Sigmoid colon (tissue), 7 donors: ENCODE measurements at regions of chr2 and their contacts with region 1.

Region 1: GRCh38 chr2:190088917-190089316 is 26.4 kb upstream of the MSTN start:
- DNase-seq: no peak
- H3K4me3 ChIP-seq: no peak overlapping the region
- H3K27ac ChIP-seq: no peak overlapping the region
- H3K4me1 ChIP-seq: no peaks in the 10 kb centered on the region
- H3K27me3 ChIP-seq: no peaks in the 10 kb centered on the region
- CTCF ChIP-seq: peak; percentile 11 to 67 (median 59)
- EP300 ChIP-seq: no peak
- POLR2A ChIP-seq: no peak

Region 2: GRCh38 chr2:189821953-189822748 is 266.8 kb before region 1 on chr2:
- intact Hi-C with region 1: no loop called
- DNase-seq: no peak
- H3K4me3 ChIP-seq: no peak overlapping the region
- H3K27ac ChIP-seq: peak overlapping the region in 1 of 4 donors; percentile 19
- H3K4me1 ChIP-seq: peaks cover 0 to 11% (median 0%) of the 10 kb centered on the region in 4 donors
- H3K27me3 ChIP-seq: no peaks in the 10 kb centered on the region
- CTCF ChIP-seq: no peak
- EP300 ChIP-seq: no peak
- POLR2A ChIP-seq: no peak

Region 3: GRCh38 chr2:190180313-190181122 is 91.6 kb after region 1 on chr2:
- intact Hi-C with region 1: loop called (anchors 5 kb)
- DNase-seq: peak; percentile 71
- H3K4me3 ChIP-seq: peak overlapping the region; percentile 35 to 68 (median 66)
- H3K27ac ChIP-seq: peak overlapping the region; percentile 71 to 81 (median 74)
- H3K4me1 ChIP-seq: peaks cover 0 to 15% (median 10%) of the 10 kb centered on the region in 4 donors
- H3K27me3 ChIP-seq: no peaks in the 10 kb centered on the region
- CTCF ChIP-seq: peak in 2 of 4 experiments; percentile 23 to 34
- EP300 ChIP-seq: no peak
- POLR2A ChIP-seq: no peak

Region 4: DNA sequence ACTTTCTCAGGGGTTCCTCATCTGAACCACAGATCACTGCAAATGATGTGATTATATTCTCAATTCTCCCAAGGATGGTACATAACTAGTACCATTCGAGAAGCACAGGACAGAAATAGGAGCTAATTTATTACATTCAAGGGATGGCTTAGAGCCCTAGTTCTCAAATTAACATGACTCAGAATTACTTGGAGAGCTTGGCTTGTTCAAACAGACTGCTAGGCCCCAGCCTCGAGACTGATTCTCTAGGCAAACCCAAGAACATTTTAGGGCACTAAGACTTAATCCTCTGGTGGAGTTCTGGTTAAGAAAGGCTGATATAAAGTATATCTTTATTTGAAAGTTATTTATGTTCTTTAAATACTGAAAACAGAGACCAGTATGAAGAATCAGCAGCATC is 194.9 kb after region 1 on chr2:
- intact Hi-C with region 1: loop called (anchors 5 kb)
- DNase-seq: no peak
- H3K4me3 ChIP-seq: no peak overlapping the region
- H3K27ac ChIP-seq: peak overlapping the region in 1 of 4 donors; percentile 4
- H3K4me1 ChIP-seq: no peaks in the 10 kb centered on the region
- H3K27me3 ChIP-seq: no peaks in the 10 kb centered on the region
- CTCF ChIP-seq: no peak
- EP300 ChIP-seq: no peak
- POLR2A ChIP-seq: no peak

Region 5: GRCh38 chr2:190319555-190320498 is 230.9 kb after region 1 on chr2 and contains the start of gene HIBCH:
- intact Hi-C with region 1: loop called (anchors 2 kb)
- DNase-seq: peak; percentile 99
- H3K4me3 ChIP-seq: peak within 1 kb of the TSS; percentile 58 to 72 (median 64)
- H3K27ac ChIP-seq: peak within 1 kb of the TSS; percentile 80 to 91 (median 89)
- H3K4me1 ChIP-seq: peaks cover 0 to 41% (median 33%) of the 10 kb centered on the region in 4 donors
- H3K27me3 ChIP-seq: no peaks in the 10 kb centered on the region
- CTCF ChIP-seq: peak; percentile 46 to 66 (median 62)
- EP300 ChIP-seq: peak in 1 of 4 donors; percentile 46
- POLR2A ChIP-seq: peak; percentile 33 to 49
- total RNA-seq, gene HIBCH: 18.1 to 21.6 (median 19.0) TPM

Region 6: DNA sequence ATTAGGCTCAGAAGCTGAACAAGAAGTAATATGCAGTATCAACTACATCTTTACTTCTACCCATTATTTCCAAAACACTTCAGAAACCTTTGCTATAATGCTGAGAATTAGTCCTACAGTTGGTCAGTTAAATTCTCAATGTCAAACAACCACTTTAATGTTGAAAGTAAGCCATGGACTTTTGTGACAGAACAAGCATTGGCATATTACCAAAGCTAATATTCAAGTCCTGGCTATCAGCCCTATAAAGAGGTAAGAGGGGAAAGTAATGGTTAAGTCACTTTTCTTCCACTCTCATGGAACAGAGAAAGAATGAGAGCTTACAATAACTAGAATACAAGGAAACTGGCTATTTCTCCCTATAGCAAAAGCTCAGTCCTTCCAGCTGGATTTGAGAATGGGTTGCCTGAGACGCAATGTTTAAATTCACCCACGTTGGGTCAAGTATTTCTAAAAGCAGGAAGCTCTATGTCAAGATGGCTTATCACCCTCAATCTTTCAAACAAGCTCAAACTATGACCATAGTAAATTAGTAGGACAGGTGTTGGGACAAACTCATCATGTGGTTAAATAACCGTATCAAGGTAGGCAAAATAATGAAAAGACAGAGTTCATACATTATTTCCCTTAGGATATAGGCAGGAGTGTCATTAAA is 287.8 kb after region 1 on chr2:
- intact Hi-C with region 1: loop called (anchors 2 kb)
- DNase-seq: no peak
- H3K4me3 ChIP-seq: no peak overlapping the region
- H3K27ac ChIP-seq: no peak overlapping the region
- H3K4me1 ChIP-seq: peaks cover 0 to 7% (median 0%) of the 10 kb centered on the region in 4 donors
- H3K27me3 ChIP-seq: no peaks in the 10 kb centered on the region
- CTCF ChIP-seq: no peak
- EP300 ChIP-seq: no peak
- POLR2A ChIP-seq: no peak

Region 7: DNA sequence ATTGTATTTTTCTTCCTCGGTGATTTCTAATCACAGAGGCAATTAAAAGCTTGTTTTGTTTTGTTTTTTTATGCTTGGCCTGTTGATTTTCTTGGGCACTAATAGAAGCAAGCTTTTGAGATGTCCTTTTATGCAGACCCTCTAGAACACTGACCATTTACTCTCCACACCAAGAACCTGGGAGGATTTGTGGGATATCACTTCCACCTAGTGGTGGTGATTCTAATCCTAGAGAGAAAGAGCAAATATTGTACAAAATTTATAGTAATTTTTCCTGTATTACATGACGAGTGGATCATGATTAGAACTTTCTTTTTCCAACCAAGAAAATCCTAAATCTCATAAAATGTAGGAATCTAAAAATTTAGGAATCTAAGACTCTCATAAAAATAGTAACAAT is 422.2 kb after region 1 on chr2:
- intact Hi-C with region 1: loop called (anchors 10 kb)
- DNase-seq: no peak
- H3K4me3 ChIP-seq: no peak overlapping the region
- H3K27ac ChIP-seq: no peak overlapping the region
- H3K4me1 ChIP-seq: peaks cover 0 to 11% (median 0%) of the 10 kb centered on the region in 4 donors
- H3K27me3 ChIP-seq: no peaks in the 10 kb centered on the region
- CTCF ChIP-seq: peak; percentile 5 to 63 (median 39)
- EP300 ChIP-seq: no peak
- POLR2A ChIP-seq: no peak

Region 8: GRCh38 chr2:190804182-190804795 is 715.4 kb after region 1 on chr2:
- intact Hi-C with region 1: loop called (anchors 5 kb)
- DNase-seq: no peak
- H3K4me3 ChIP-seq: no peak overlapping the region
- H3K27ac ChIP-seq: no peak overlapping the region
- H3K4me1 ChIP-seq: peaks cover 0 to 3% (median 0%) of the 10 kb centered on the region in 4 donors
- H3K27me3 ChIP-seq: no peaks in the 10 kb centered on the region
- CTCF ChIP-seq: peak; percentile 30 to 63 (median 54)
- EP300 ChIP-seq: no peak
- POLR2A ChIP-seq: no peak